ENCODE measurements at regions of chr10 and their contacts with region 1.

Region 1: DNA sequence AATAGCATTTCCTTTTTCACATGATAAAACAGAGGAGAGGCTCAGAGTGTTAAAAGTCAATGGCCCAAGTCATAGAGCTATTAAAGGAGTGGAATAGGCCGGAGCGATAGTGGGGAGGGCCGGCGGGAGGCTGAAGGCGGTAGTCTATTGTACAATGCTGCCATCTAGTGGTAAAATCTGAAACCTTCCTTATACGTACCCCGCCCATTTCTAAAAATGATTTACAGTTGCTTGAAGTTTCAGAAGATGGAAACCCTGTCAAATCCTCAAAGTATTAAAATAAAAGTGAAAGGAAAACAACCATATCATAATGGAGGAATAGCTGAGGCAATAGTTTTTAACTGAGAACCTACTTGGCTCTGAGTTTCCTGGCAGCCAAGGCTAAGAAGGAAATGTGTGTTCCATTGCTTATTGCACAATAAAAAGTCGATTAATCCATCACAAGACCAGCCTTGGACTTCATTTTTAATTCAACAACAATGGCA is 209.1 kb downstream of the CCSER2 start:
- H3K4me3 ChIP-seq: no peak overlapping the region
- H3K27ac ChIP-seq: no peak overlapping the region
- H3K4me1 ChIP-seq: no peaks in the 10 kb centered on the region
- CTCF ChIP-seq: peak; percentile 66

Region 2: GRCh38 chr10:84264611-84265141 is 272.8 kb before region 1 on chr10:
- CTCF ChIA-PET with region 1: interaction called, 291 read pairs
- POLR2A ChIA-PET with region 1: no interaction called
- H3K4me3 ChIP-seq: no peak overlapping the region
- H3K27ac ChIP-seq: no peak overlapping the region
- H3K4me1 ChIP-seq: no peaks in the 10 kb centered on the region
- CTCF ChIP-seq: peak; percentile 87

Region 3: GRCh38 chr10:84360637-84361365 is 176.7 kb before region 1 on chr10:
- CTCF ChIA-PET with region 1: interaction called, 33 read pairs
- POLR2A ChIA-PET with region 1: no interaction called
- H3K4me3 ChIP-seq: peak overlapping the region; percentile 23
- H3K27ac ChIP-seq: no peak overlapping the region
- H3K4me1 ChIP-seq: peaks cover 10% of the 10 kb centered on the region
- CTCF ChIP-seq: no peak

Region 4: DNA sequence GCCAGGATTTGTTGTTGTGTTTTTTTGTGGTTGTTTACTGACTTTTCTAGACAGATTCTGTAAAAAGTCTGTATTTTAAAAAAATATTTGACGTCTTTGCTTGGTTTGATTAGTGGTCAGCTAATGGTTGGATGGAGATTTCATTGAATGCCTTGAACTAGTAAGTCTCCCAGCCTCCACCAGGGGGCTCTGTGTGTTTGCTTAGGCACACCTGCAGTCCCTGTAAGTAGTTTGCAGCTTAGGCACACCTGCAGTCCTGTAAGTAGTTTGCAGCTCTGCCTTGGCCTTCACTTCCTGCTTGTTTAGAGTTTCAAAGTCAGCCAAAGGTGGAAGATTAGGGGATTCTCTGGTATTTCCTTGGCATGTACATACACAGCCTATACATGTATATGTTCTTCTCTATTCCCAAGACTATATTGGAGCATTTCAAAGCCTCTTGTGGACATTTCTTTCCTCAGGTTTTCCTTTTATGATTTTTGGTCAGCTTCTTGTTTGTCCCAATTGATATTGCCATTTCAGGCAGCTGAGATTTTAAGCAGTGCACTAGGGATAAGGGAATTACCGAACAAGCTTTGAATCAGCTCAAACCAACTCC is 107.5 kb before region 1 on chr10:
- CTCF ChIA-PET with region 1: interaction called, 32 read pairs
- POLR2A ChIA-PET with region 1: no interaction called
- H3K4me3 ChIP-seq: no peak overlapping the region
- H3K27ac ChIP-seq: no peak overlapping the region
- H3K4me1 ChIP-seq: 0 out of 2 replicates have a peak, but pooled peaks cover 2% of the 10 kb centered on the region
- CTCF ChIP-seq: peak; percentile 53; the same call in 1 of the 2 replicates

Region 5: DNA sequence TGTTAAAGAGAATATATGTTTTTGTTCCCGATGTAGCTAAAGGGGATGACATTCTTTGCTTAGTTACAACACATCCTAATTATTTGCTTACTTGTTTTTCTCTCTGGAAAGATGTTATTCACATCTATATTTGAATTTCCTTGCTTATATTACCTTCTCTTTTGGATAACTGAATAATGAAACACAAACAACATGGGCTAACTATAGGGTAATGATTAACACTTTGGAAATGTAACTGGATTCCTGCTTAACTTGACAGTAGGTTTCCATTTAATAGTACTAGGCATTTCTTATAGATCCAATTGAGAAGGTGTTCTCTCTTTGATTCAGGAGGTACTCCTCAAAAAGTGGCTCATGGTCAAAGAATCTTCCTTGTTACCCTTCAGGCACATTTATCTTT is 68.0 kb before region 1 on chr10:
- CTCF ChIA-PET with region 1: no interaction called
- POLR2A ChIA-PET with region 1: no interaction called
- H3K4me3 ChIP-seq: no peak overlapping the region
- H3K27ac ChIP-seq: no peak overlapping the region
- H3K4me1 ChIP-seq: no peaks in the 10 kb centered on the region
- CTCF ChIP-seq: no peak

Region 6: GRCh38 chr10:84548869-84549268 is 11.4 kb after region 1 on chr10:
- CTCF ChIA-PET with region 1: interaction called, 61 read pairs
- POLR2A ChIA-PET with region 1: no interaction called
- H3K4me3 ChIP-seq: no peak overlapping the region
- H3K27ac ChIP-seq: no peak overlapping the region
- H3K4me1 ChIP-seq: no peaks in the 10 kb centered on the region
- CTCF ChIP-seq: no peak

Region 7: DNA sequence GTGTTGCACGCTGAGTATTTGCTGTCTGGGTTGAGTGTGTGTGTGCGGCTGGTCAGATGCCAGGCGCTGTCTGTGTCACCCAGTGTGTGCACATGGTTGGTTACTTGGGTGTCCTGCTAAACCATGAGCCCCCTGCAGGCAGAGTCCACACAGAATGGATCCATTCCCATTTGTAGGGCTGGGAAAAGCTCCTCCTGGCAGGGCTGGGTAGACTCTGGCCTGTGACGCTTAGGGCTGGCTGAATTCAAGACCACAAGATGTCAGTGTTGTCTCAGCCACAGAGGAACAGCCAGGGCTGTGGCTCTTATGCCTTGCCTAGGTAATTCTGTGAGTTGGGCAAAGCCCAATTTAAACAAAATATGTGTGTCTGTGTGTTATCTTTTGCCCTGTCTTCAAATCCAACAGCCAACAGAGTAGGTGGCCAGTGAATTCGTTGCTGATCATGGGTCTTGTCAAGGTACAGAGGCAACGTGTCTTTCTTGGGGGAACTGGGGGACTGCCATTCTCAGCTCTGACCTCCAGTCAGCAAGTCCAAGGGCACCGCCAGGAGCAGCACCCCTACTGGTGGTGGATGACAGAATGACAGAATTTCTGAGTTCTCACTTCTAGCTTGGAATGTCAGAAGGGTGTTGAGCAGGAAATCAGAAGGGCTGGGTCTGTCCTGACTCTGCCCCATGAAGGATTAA is 76.0 kb after region 1 on chr10:
- CTCF ChIA-PET with region 1: interaction called, 11 read pairs
- POLR2A ChIA-PET with region 1: no interaction called
- H3K4me3 ChIP-seq: no peak overlapping the region
- H3K27ac ChIP-seq: no peak overlapping the region
- H3K4me1 ChIP-seq: no peaks in the 10 kb centered on the region
- CTCF ChIP-seq: peak; percentile 89